A673 (cell line): ENCODE measurements at regions of chr2 and their contacts with region 1.

Region 1: GRCh38 chr2:233053928-233054784 is 6.0 kb upstream of the INPP5D start:
- DNase-seq: peak; percentile 68
- H3K4me3 ChIP-seq: no peak overlapping the region
- H3K27ac ChIP-seq: no peak overlapping the region
- H3K4me1 ChIP-seq: no peaks in the 10 kb centered on the region
- H3K27me3 ChIP-seq: no peaks in the 10 kb centered on the region
- CTCF ChIP-seq: peak; percentile 99

Region 2: GRCh38 chr2:232600053-232600773 is 453.9 kb before region 1 on chr2:
- CTCF ChIA-PET with region 1: no interaction called
- POLR2A ChIA-PET with region 1: no interaction called
- intact Hi-C with region 1: loop called (anchors 10 kb)
- DNase-seq: no peak
- H3K4me3 ChIP-seq: no peak overlapping the region
- H3K27ac ChIP-seq: no peak overlapping the region
- H3K4me1 ChIP-seq: no peaks in the 10 kb centered on the region
- H3K27me3 ChIP-seq: no peaks in the 10 kb centered on the region
- CTCF ChIP-seq: no peak

Region 3: DNA sequence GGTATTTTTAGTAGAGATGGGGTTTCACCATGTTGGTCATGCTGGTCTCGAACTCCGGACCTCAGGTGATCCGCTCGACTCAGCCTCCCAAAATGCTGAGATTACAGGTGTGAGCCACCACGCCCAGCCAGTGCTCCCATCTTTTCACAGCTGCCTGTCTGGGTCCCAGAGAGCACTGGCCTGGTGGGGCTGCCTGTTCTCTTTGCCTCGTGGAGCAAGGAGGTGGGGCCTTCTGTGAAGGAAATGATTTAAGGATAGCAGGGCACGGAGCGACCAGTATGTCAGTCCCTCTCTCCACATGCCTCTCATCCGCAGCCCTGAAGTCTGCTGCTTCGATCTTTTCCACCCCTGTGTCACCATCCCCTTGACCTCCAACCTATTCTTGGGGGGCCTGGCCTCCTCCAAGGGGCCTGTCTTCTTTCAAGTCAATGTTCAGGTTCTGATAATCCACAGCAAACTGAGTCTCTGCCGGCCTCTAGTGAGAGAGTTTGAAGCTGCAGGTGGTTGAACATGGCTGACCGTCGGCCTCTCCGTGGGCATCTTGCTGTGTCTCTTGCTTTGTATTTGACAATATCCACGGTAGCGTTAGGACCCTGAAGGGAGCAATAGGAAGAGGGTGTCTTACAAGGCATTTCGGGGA is 385.2 kb before region 1 on chr2:
- CTCF ChIA-PET with region 1: no interaction called
- POLR2A ChIA-PET with region 1: no interaction called
- intact Hi-C with region 1: no loop called
- DNase-seq: peak; percentile 29
- H3K4me3 ChIP-seq: no peak overlapping the region
- H3K27ac ChIP-seq: no peak overlapping the region
- H3K4me1 ChIP-seq: no peaks in the 10 kb centered on the region
- H3K27me3 ChIP-seq: no peaks in the 10 kb centered on the region
- CTCF ChIP-seq: peak; percentile 52

Region 4: GRCh38 chr2:232842689-232843088 is 211.5 kb before region 1 on chr2:
- CTCF ChIA-PET with region 1: no interaction called
- POLR2A ChIA-PET with region 1: interaction called, 10 read pairs
- intact Hi-C with region 1: no loop called
- DNase-seq: no peak
- H3K4me3 ChIP-seq: no peak overlapping the region
- H3K27ac ChIP-seq: no peak overlapping the region
- H3K4me1 ChIP-seq: peaks cover 12% of the 10 kb centered on the region
- H3K27me3 ChIP-seq: no peaks in the 10 kb centered on the region
- CTCF ChIP-seq: no peak

Region 5: DNA sequence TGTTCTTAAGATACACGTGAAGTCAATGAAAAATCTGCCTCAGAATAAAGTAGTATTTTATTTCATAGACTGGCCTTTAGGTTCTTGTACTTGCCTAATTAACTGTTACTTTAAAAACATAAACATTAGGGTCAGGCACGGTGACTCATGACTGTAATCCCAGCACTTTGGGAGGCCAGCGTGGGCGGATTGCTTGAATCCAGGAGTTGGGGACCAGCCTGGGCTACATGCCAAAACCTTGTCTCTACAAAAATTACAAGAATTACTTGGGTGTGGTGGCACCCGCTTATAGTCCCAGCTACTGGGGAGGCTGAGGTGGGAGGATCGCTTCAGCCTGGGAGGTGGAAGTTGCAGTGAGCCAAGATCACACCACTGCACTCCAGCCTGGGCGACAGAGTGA is 200.1 kb before region 1 on chr2:
- CTCF ChIA-PET with region 1: interaction called, 3 read pairs
- POLR2A ChIA-PET with region 1: no interaction called
- intact Hi-C with region 1: loop called (anchors 2 kb)
- DNase-seq: peak; percentile 74
- H3K4me3 ChIP-seq: no peak overlapping the region
- H3K27ac ChIP-seq: no peak overlapping the region
- H3K4me1 ChIP-seq: peaks cover 10% of the 10 kb centered on the region
- H3K27me3 ChIP-seq: no peaks in the 10 kb centered on the region
- CTCF ChIP-seq: no peak

Region 6: GRCh38 chr2:233075966-233076339 is 21.8 kb after region 1 on chr2:
- CTCF ChIA-PET with region 1: no interaction called
- POLR2A ChIA-PET with region 1: no interaction called
- intact Hi-C with region 1: no loop called
- DNase-seq: no peak
- H3K4me3 ChIP-seq: no peak overlapping the region
- H3K27ac ChIP-seq: no peak overlapping the region
- H3K4me1 ChIP-seq: no peaks in the 10 kb centered on the region
- H3K27me3 ChIP-seq: no peaks in the 10 kb centered on the region
- CTCF ChIP-seq: no peak